Heart right ventricle (tissue), 16 donors: ENCODE measurements at regions of chr11 and their contacts with region 1.

Region 1: DNA sequence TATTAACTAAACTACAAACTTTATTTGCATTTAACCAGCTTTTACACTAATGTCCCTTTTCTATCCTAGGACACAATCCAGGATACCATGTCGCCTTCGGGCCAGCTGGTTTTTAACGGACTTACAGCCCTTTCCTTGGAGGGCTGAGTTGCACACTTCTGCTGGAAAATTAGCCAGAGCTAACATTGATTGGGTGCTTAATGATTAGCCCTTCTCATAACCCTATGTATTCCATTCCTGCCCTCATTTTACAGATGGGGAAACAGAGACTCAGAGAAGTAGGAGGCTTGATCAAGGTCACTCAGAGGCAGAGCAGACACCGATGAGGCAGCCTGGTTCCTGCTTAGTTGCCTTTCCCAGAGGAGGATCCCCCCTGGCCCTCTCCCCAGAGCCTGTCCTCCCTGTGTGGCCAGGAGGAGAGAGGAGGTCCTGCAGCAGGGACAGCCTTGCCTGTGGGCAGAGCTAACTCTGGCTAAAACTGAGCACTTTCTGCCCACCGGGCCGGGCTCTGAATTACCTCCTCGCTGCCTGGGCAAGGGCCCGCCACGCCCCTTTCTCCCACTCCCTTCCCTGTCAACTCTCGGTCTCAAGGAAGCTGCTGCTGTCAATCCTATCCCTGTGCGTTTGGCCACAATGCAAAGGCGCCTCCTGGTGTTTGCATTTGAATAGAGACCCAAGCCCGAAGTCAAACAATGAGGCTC is 59.6 kb upstream of the PAX6 start:
- DNase-seq: peak; percentile 13 to 32
- ATAC-seq: peak in 6 of 8 donors; percentile 23 to 67 (median 54)
- H3K4me3 ChIP-seq: no peak overlapping the region
- H3K27ac ChIP-seq: no peak overlapping the region
- H3K4me1 ChIP-seq: no peaks in the 10 kb centered on the region
- H3K27me3 ChIP-seq: peaks cover 0 to 79% (median 42%) of the 10 kb centered on the region in 7 donors
- CTCF ChIP-seq: peak in 8 of 9 donors; percentile 26 to 74 (median 66)

Region 2: DNA sequence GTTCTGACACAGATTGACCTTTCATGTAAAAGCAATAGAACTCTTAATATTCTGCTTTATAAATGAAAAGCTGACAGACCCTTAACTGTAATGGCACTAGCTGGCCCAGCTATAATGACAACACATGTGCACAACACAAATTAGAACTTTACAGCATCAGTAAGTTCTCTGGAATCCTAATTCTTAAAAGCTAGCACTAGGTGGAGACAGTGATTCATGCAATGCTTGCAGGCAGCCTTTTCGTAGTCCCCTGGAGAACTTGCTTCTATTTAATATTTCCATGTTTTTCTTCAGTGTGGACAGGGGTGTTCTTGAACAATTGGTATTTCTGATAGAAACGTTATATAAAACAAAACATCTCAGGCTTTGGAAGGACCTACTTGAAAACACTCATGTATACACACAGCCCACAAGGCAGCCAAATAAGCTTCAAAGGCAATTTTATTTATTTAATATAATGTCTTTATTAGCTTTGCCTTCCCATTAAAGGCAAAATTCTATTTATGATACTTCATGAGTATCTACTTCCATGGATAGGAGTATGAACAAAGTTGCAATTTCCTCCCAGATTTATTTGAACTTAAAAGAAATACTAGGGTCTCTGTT is 910.3 kb before region 1 on chr11:
- intact Hi-C with region 1: loop called in 1 of 10 experiments (anchors 10 kb)
- DNase-seq: no peak
- ATAC-seq: peak in 1 of 8 donors; percentile 25
- H3K4me3 ChIP-seq: no peak overlapping the region
- H3K27ac ChIP-seq: no peak overlapping the region
- H3K4me1 ChIP-seq: no peaks in the 10 kb centered on the region
- H3K27me3 ChIP-seq: peaks cover 0 to 7% (median 0%) of the 10 kb centered on the region in 7 donors
- CTCF ChIP-seq: peak; percentile 15 to 73 (median 49)

Region 3: DNA sequence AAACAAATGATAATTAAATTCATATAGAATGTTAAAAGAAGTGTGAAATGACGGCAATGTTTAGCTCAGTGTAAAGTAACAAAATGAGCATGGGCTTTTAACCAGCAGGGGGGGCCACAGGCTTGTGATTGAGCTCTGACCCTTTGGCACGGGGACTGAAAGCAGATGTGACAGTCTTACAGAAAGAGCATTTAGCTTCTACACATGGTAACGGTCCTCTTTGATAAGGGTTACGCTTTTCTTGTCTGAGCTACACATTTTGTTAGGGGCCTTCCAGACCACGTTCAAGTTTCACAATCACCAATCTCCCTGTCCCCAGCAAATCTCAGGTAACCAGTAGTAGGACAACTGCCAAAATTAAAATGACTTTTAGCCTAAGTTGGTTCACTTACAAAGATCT is 763.7 kb before region 1 on chr11:
- intact Hi-C with region 1: loop called in 2 of 10 experiments (anchors 5 to 10 kb)
- DNase-seq: peak; percentile 24 to 49
- ATAC-seq: peak in 5 of 8 donors; percentile 38 to 69 (median 67)
- H3K4me3 ChIP-seq: no peak overlapping the region
- H3K27ac ChIP-seq: no peak overlapping the region
- H3K4me1 ChIP-seq: no peaks in the 10 kb centered on the region
- H3K27me3 ChIP-seq: peaks cover 0 to 4% (median 0%) of the 10 kb centered on the region in 7 donors
- CTCF ChIP-seq: peak; percentile 12 to 77 (median 72)

Region 4: DNA sequence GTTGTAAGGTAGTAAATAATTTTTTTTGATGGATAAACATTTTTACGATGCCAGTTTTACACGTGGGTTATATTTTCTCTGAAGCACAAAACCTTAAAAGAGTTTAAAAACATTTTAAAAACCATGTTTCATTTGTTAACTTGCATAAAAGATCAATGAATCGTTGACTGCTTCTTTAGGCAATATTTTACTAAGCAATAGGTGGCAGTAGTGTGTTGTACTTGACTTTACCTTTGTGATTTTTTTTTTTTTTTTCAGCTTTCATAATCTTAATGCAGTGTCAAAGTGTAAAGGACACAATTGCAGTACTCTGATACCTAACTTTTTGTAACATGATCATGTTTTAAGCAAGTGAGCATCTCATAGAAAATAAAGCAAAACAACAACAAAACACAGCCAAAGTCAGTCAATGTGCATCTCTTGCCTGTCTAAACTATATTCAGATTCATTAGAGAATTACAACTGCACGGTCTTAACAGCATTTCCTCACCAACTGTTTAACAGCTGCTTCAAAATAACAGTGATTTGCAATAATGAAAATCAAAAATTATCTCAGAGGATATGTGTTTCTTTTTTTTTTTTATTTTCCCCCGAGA is 473.4 kb before region 1 on chr11:
- intact Hi-C with region 1: loop called in 9 of 10 experiments (anchors 2 to 10 kb)
- DNase-seq: no peak
- ATAC-seq: no peak
- H3K4me3 ChIP-seq: no peak overlapping the region
- H3K27ac ChIP-seq: no peak overlapping the region
- H3K4me1 ChIP-seq: no peaks in the 10 kb centered on the region
- H3K27me3 ChIP-seq: no peaks in the 10 kb centered on the region
- CTCF ChIP-seq: peak; percentile 17 to 73 (median 58)

Region 5: GRCh38 chr11:31487848-31488247 is 382.9 kb before region 1 on chr11:
- intact Hi-C with region 1: loop called in 4 of 10 experiments (anchors 5 to 10 kb)
- DNase-seq: no peak
- ATAC-seq: no peak
- H3K4me3 ChIP-seq: no peak overlapping the region
- H3K27ac ChIP-seq: no peak overlapping the region
- H3K4me1 ChIP-seq: peaks cover 0 to 10% (median 0%) of the 10 kb centered on the region in 9 donors
- H3K27me3 ChIP-seq: no peaks in the 10 kb centered on the region
- CTCF ChIP-seq: peak in 7 of 9 donors; percentile 28 to 54 (median 45)

Region 6: DNA sequence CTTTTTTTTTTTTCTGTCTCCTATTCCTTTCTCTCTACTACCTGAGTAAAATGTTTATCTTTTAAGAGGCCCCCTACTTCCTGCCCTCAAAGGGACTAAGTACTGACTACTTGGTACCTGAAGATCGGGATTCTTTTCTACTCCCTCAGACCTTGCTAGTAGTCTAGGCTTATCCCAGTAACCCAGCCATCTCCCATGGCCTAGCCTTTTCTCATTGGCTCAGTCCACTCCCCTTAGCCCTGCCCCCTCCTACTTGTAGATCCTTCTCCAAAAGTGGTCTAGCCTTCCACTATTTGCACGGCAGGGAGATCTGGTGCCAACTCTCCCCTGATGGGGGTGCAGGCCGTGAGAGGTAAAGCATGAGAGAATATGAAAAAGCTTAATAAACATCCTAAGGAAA is 353.8 kb after region 1 on chr11:
- intact Hi-C with region 1: no loop called
- DNase-seq: no peak
- ATAC-seq: no peak
- H3K4me3 ChIP-seq: no peak overlapping the region
- H3K27ac ChIP-seq: no peak overlapping the region
- H3K4me1 ChIP-seq: no peaks in the 10 kb centered on the region
- H3K27me3 ChIP-seq: peaks cover 0 to 24% (median 5%) of the 10 kb centered on the region in 7 donors
- CTCF ChIP-seq: no peak